ENCODE measurements at regions of chr3 and their contacts with region 1.

Region 1: DNA sequence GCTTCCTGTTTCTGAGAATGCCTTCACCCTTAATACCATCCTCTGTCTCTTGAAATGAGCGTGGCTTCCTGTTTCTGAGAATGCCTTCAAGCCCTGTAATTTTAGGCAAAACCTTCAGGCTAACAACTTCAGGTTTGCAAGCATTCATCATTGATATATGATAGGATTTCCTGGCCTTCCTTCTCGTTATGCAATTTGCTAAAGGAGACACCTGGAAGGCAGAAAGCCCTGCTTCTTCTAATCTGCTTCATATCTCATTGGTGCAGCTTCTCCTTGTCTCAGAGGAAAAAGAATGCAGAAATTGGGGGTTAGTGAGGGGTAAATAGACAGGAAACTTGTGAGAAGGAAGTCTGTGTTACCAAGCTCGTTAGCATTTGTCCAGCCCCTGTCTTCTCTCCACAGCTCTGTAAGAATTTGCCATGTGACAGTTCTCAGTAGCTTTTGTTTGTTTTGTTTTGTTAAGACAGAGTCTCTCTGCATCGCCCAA is 7.3 kb downstream of the ARL6IP5 start:
- DNase-seq: peak; percentile 26
- H3K4me3 Mint-ChIP-seq: peak overlapping the region; percentile 85
- H3K27ac Mint-ChIP-seq: peak overlapping the region; percentile 95
- H3K4me1 Mint-ChIP-seq: peaks cover 72% of the 10 kb centered on the region
- H3K27me3 Mint-ChIP-seq: no peaks in the 10 kb centered on the region

Region 2: GRCh38 chr3:68467465-68467864 is 624.6 kb before region 1 on chr3:
- intact Hi-C with region 1: no loop called
- DNase-seq: no peak
- H3K4me3 Mint-ChIP-seq: no peak overlapping the region
- H3K27ac Mint-ChIP-seq: no peak overlapping the region
- H3K4me1 Mint-ChIP-seq: no peaks in the 10 kb centered on the region
- H3K27me3 Mint-ChIP-seq: no peaks in the 10 kb centered on the region

Region 3: DNA sequence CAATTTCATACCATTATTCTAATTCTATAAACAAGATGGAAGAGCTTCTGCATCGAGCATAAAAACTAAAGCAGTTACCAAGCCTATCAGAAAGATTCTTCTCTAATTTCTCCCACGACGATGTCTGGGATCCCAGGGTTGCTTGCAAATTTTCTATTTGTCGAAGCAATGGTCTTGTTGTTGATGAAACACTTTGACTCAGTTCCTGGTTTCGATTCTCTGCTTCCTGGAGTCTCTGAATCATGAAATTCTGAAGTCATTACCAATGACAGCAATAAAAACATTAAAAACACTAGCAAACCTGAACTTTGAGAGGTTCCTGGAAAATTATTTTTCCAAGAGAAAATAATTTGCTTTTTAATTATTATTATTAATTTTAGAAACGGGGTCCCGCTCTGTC is 58.6 kb before region 1 on chr3:
- intact Hi-C with region 1: loop called (anchors 2 kb)
- DNase-seq: no peak
- H3K4me3 Mint-ChIP-seq: no peak overlapping the region
- H3K27ac Mint-ChIP-seq: peak overlapping the region; percentile 78
- H3K4me1 Mint-ChIP-seq: peaks cover 18% of the 10 kb centered on the region
- H3K27me3 Mint-ChIP-seq: no peaks in the 10 kb centered on the region

Region 4: GRCh38 chr3:69051756-69052471 is 40.2 kb before region 1 on chr3 and contains the start of gene TMF1:
- intact Hi-C with region 1: loop called (anchors 1 kb)
- DNase-seq: peak; percentile 97
- H3K4me3 Mint-ChIP-seq: peak within 1 kb of the TSS; percentile 94
- H3K27ac Mint-ChIP-seq: peak within 1 kb of the TSS; percentile 92
- H3K4me1 Mint-ChIP-seq: peaks cover 34% of the 10 kb centered on the region
- H3K27me3 Mint-ChIP-seq: no peaks in the 10 kb centered on the region
- total RNA-seq, gene TMF1: 35.7 and 38.9 TPM in 2 replicates

Region 5: DNA sequence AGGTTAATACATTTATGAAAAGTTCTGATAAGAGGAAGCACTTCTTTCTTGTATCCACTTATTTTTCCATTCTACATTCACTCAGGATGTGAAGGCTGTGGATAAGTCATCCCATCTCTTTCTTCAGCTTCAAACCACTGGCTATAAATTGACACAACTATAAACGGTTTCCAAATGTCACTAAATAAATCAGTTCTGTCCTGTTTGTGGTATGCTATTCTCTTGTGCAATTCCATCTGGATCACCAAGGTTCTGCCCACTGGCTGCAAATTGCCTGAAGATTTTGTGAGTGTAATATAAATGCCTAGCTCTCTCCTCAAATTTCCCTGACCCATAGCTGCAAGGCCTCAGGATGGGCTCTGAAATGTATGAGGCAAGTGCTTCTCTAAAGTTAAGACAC is 37.5 kb after region 1 on chr3:
- intact Hi-C with region 1: no loop called
- DNase-seq: no peak
- H3K4me3 Mint-ChIP-seq: no peak overlapping the region
- H3K27ac Mint-ChIP-seq: no peak overlapping the region
- H3K4me1 Mint-ChIP-seq: peaks cover 3% of the 10 kb centered on the region
- H3K27me3 Mint-ChIP-seq: peaks cover 11% of the 10 kb centered on the region

Region 6: GRCh38 chr3:69282181-69282580 is 190.1 kb after region 1 on chr3:
- intact Hi-C with region 1: loop called (anchors 5 kb)
- DNase-seq: no peak
- H3K4me3 Mint-ChIP-seq: peak overlapping the region; percentile 37
- H3K27ac Mint-ChIP-seq: peak overlapping the region; percentile 81
- H3K4me1 Mint-ChIP-seq: peaks cover 24% of the 10 kb centered on the region
- H3K27me3 Mint-ChIP-seq: no peaks in the 10 kb centered on the region